PC-9 (cell line): ENCODE measurements at regions of chr1 and their contacts with region 1.

Region 1: GRCh38 chr1:24321697-24322469 is 2.7 kb downstream of the GRHL3 start:
- DNase-seq: peak; percentile 83 to 86
- H3K4me3 ChIP-seq: peak overlapping the region; percentile 59
- H3K27ac ChIP-seq: peak overlapping the region; percentile 98
- H3K4me1 ChIP-seq: peaks cover 54% of the 10 kb centered on the region
- H3K27me3 ChIP-seq: no peaks in the 10 kb centered on the region
- CTCF ChIP-seq: no peak

Region 2: GRCh38 chr1:24216276-24217074 is 105.4 kb before region 1 on chr1:
- CTCF ChIA-PET with region 1: no interaction called
- POLR2A ChIA-PET with region 1: no interaction called
- intact Hi-C with region 1: loop called (anchors 5 kb)
- DNase-seq: peak; percentile 55 to 57
- H3K4me3 ChIP-seq: no peak overlapping the region
- H3K27ac ChIP-seq: no peak overlapping the region
- H3K4me1 ChIP-seq: peaks cover 10% of the 10 kb centered on the region; the same call in 1 of the 2 replicates
- H3K27me3 ChIP-seq: no peaks in the 10 kb centered on the region
- CTCF ChIP-seq: no peak

Region 3: DNA sequence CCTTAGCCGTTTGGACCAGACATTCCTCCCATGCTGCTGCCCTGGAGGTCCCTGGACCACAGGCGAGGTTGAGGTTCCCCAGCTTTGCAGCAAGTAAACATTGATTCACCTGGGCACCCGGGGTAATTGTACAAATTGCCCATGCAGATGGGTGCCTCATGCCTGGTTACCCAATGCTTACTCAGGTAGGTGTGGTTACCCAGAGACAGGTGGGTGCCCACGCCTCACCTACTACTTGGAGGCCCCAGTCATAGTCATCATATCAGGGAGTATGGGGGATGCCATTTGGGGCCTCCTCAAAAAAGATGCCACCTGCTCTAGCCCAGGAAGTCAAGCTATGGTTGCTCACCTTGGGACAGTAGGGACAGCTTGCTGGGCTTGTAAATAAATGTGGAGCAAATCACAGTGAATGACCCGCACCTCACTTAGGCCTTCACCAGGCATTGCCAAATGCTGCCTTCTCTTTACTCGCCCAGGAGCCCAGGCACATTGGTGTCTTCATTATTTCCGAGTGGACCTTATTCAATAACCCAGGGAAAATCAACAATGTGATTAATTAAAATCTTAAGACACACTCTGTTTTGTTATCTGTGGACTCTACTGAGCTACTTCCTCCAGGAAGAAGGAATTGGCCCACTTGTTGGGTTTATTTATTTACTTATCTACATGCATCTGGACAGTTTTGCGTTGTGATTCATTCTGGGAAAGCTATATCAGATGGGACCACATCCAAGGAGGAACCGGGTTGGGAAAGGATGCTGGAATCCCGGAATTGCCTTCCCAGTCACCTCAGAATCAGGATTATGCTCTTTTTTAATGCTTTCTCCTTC is 38.3 kb before region 1 on chr1:
- CTCF ChIA-PET with region 1: no interaction called
- POLR2A ChIA-PET with region 1: interaction called, 5 read pairs
- intact Hi-C with region 1: loop called (anchors 2 kb)
- DNase-seq: peak; percentile 54 to 90
- H3K4me3 ChIP-seq: no peak overlapping the region
- H3K27ac ChIP-seq: peak overlapping the region; percentile 94
- H3K4me1 ChIP-seq: peaks cover 59% of the 10 kb centered on the region
- H3K27me3 ChIP-seq: no peaks in the 10 kb centered on the region
- CTCF ChIP-seq: no peak

Region 4: DNA sequence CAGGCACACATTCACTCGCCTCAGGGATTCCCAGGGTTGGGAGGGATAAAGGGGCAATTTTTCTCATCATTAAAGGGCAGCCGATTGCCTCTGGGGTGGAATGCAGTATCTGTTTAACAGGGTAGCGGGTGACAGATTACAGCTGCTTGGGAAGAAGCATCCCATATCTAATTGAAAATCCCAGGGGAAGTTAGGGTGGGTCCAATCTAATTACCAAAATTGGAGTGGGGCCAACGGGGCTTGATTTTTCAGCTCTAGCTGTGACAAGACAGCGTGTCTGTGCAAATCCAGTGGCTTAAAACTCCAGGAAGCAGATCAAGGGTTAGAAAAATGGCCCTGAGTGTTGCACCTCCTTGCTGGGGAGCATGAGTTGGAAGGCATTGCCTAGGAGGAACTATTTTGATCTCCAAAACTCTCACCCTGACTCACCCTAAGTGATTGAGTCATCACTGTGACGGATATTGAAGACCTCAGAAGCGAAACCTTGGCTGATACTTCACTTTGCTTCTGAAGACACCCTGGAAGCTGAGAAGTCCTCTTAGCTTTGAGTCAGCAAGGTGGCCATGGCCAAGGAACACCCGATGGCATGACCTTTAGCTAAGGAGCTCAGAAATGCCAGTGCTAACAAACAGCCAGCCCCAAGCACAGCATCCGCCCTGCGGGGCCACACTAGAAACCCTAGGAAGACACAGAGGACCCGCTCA is 43.2 kb after region 1 on chr1:
- CTCF ChIA-PET with region 1: no interaction called
- POLR2A ChIA-PET with region 1: interaction called, 5 read pairs
- intact Hi-C with region 1: loop called (anchors 2 kb)
- DNase-seq: peak; percentile 57 to 97
- H3K4me3 ChIP-seq: no peak overlapping the region
- H3K27ac ChIP-seq: peak overlapping the region; percentile 95
- H3K4me1 ChIP-seq: peaks cover 33% of the 10 kb centered on the region
- H3K27me3 ChIP-seq: no peaks in the 10 kb centered on the region
- CTCF ChIP-seq: no peak

Region 5: DNA sequence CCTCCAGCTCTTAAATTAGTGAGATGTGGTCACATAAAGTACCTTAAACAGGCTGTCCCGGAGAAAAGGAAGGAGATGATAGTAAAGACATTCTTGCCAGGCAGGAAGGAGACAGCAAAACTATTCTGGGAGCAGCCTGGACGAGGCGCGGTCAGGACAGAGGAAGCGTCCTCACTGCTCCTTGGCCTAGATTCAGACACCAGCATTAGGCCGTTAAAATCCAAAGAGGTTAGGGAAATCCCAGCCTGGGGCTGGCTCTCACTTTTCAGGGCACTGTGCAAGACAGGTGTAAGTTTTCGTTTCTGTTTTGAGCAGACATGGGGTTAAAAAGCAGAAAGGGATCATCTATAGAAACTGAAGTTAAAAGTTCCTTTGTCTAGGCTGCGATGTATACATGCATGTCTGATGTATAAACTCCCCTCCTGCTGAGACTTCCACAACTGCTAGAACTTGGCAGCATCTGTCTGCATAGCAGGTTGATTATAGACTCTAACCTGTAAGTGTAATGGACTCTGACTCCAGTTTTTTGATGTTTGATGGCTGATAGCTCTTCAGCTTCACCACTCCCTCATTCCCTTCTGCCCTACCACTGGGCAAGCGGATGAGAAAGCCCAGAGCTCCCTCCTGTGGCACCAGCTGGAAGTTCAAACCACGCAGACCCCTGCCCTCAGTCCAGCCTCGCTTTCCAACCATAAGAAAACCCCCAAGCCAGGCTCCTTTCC is 70.2 kb after region 1 on chr1:
- CTCF ChIA-PET with region 1: no interaction called
- POLR2A ChIA-PET with region 1: no interaction called
- intact Hi-C with region 1: loop called (anchors 2 kb)
- DNase-seq: peak; percentile 47 to 50
- H3K4me3 ChIP-seq: no peak overlapping the region
- H3K27ac ChIP-seq: peak overlapping the region; percentile 14; the same call in 1 of the 2 replicates
- H3K4me1 ChIP-seq: peaks cover 8% of the 10 kb centered on the region
- H3K27me3 ChIP-seq: no peaks in the 10 kb centered on the region
- CTCF ChIP-seq: peak; percentile 80